Activated B cell treated with CpG ODN at 0.5 μM for 24 hours (primary cell): ENCODE measurements at regions of chr20 and their contacts with region 1.

Region 1: GRCh38 chr20:32031007-32031958 is 20.8 kb upstream of the HCK start:
- DNase-seq: peak; percentile 67
- ATAC-seq: peak; percentile 56
- H3K4me3 Mint-ChIP-seq: peak overlapping the region; percentile 71
- H3K27ac Mint-ChIP-seq: no peak overlapping the region
- H3K4me1 Mint-ChIP-seq: peaks cover 33% of the 10 kb centered on the region
- H3K27me3 Mint-ChIP-seq: peaks cover 3% of the 10 kb centered on the region
- CTCF ChIP-seq: peak; percentile 100

Region 2: GRCh38 chr20:31822421-31823330 is 208.6 kb before region 1 on chr20:
- CTCF ChIA-PET with region 1: interaction called, 18 read pairs
- POLR2A ChIA-PET with region 1: no interaction called
- intact Hi-C with region 1: loop called (anchors 1 kb)
- DNase-seq: peak; percentile 79
- ATAC-seq: peak; percentile 97
- H3K4me3 Mint-ChIP-seq: no peak overlapping the region
- H3K27ac Mint-ChIP-seq: no peak overlapping the region
- H3K4me1 Mint-ChIP-seq: peaks cover 4% of the 10 kb centered on the region
- H3K27me3 Mint-ChIP-seq: no peaks in the 10 kb centered on the region
- CTCF ChIP-seq: peak; percentile 92

Region 3: DNA sequence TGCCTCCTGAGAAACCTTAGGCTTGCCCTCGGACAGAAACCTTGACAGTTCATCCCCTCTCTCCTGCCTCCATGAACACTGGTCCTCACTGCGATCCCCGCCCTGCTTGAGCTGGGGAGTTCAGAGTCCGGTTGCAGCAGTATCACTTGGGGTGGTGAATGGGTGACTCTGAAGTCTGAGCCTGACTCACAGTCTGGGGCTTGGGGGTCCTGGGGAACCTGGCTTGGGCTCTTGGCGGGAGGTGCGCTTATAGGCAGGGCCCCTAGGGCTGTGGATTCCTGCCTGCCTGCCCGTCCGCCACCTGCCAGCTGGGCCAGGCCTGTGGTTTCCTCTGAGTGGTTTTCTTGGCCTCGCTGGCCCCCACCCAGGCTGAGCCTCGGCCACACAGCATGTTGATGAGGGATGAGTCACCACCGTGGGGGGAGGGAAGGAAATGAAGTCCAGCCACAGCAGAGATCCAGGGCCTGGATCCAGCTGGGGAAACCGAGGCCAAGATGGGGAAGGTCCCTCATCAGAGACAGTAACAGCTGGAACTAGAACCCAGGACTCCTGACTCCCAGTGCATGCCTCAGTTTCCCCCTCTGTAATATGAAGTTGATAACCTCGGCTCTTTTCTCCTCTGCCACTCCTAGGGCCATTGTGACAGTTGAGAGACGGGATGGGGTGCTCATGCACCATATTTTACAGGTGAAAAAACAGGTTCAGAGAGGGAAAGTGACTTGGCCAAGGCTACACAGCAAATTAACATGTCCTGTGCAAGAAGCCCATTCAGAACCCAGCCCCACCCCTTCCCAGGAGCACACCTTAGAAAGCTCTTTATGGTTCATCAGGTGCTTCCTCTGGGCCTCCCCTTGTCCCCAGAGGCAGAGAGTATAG is 195.1 kb before region 1 on chr20:
- CTCF ChIA-PET with region 1: no interaction called
- POLR2A ChIA-PET with region 1: no interaction called
- intact Hi-C with region 1: no loop called
- DNase-seq: peak; percentile 29
- ATAC-seq: peak; percentile 72
- H3K4me3 Mint-ChIP-seq: no peak overlapping the region
- H3K27ac Mint-ChIP-seq: no peak overlapping the region
- H3K4me1 Mint-ChIP-seq: peaks cover 9% of the 10 kb centered on the region
- H3K27me3 Mint-ChIP-seq: no peaks in the 10 kb centered on the region
- CTCF ChIP-seq: no peak

Region 4: GRCh38 chr20:31856516-31856915 is 174.8 kb before region 1 on chr20:
- CTCF ChIA-PET with region 1: interaction called, 47 read pairs
- POLR2A ChIA-PET with region 1: no interaction called
- intact Hi-C with region 1: loop called (anchors 1 kb)
- DNase-seq: no peak
- ATAC-seq: no peak
- H3K4me3 Mint-ChIP-seq: no peak overlapping the region
- H3K27ac Mint-ChIP-seq: no peak overlapping the region
- H3K4me1 Mint-ChIP-seq: peaks cover 13% of the 10 kb centered on the region
- H3K27me3 Mint-ChIP-seq: peaks cover 9% of the 10 kb centered on the region
- CTCF ChIP-seq: no peak

Region 5: GRCh38 chr20:31968291-31969126 is 62.8 kb before region 1 on chr20:
- CTCF ChIA-PET with region 1: interaction called, 3 read pairs
- POLR2A ChIA-PET with region 1: no interaction called
- intact Hi-C with region 1: loop called (anchors 5 kb)
- DNase-seq: peak; percentile 86
- ATAC-seq: peak; percentile 99
- H3K4me3 Mint-ChIP-seq: peak overlapping the region; percentile 85
- H3K27ac Mint-ChIP-seq: peak overlapping the region; percentile 12
- H3K4me1 Mint-ChIP-seq: peaks cover 14% of the 10 kb centered on the region
- H3K27me3 Mint-ChIP-seq: peaks cover 45% of the 10 kb centered on the region
- CTCF ChIP-seq: no peak

Region 6: DNA sequence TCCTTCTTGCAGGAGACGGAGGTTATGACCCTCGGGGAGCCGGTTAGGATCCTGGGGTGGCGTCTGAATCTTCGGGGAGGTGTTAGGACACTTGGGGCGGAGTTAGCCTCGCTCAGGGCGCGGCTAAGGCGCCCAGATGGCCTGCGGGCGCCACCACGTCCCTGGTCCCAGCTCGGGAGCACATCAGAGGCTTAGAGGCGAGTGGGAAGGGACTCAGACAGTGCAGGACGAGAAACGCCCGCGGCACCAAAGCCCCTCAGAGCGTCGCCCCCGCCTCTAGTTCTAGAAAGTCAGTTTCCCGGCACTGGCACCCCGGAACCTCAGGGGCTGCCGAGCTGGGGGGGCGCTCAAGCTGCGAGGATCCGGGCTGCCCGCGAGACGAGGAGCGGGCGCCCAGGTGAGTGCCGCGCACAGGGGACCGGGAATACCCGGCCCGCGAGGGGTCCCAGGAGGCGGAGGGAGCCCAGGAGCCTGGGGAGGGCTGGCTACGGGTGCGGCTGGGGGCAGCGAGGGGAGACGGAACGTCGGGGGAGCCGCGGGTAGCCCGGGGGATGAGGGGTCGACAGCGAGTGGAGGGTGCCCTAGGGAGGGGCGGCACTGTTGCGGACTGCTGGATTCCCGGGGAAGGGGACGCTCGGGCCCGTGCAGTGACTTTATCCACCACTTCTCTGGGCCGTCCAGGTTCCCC is 21.0 kb after region 1 on chr20 and contains the start of gene HCK:
- CTCF ChIA-PET with region 1: interaction called, 20 read pairs
- POLR2A ChIA-PET with region 1: interaction called, 453 read pairs
- intact Hi-C with region 1: no loop called
- DNase-seq: peak; percentile 46
- ATAC-seq: peak; percentile 54
- H3K4me3 Mint-ChIP-seq: peak within 1 kb of the TSS; percentile 93
- H3K27ac Mint-ChIP-seq: peak within 1 kb of the TSS; percentile 93
- H3K4me1 Mint-ChIP-seq: peaks cover 54% of the 10 kb centered on the region
- H3K27me3 Mint-ChIP-seq: no peaks in the 10 kb centered on the region
- CTCF ChIP-seq: no peak
- total RNA-seq, gene HCK: 183 TPM in 2 replicates

Region 7: DNA sequence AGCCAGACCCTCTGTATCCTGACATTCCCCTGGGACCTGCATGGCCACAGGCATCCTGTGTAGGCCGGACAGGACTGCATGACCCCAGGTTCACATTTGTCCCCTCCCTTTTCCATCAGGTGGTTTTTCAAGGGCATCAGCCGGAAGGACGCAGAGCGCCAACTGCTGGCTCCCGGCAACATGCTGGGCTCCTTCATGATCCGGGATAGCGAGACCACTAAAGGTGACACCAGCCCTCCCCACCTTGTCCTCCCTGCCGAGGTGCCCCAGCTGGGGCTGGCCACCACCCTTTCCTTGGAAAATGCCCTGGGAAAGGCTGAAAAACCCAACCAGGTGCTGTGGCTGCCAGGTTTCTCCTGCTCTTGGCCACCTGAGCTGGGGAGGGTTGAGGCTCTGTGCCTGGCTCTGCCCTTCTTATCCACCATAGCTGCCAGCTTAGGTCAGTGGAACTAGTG is 48.4 kb after region 1 on chr20:
- CTCF ChIA-PET with region 1: interaction called, 13 read pairs
- POLR2A ChIA-PET with region 1: interaction called, 5 read pairs
- intact Hi-C with region 1: no loop called
- DNase-seq: no peak
- ATAC-seq: no peak
- H3K4me3 Mint-ChIP-seq: no peak overlapping the region
- H3K27ac Mint-ChIP-seq: no peak overlapping the region
- H3K4me1 Mint-ChIP-seq: no peaks in the 10 kb centered on the region
- H3K27me3 Mint-ChIP-seq: no peaks in the 10 kb centered on the region
- CTCF ChIP-seq: no peak

Region 8: GRCh38 chr20:32207626-32208498 is 176.6 kb after region 1 on chr20 and contains the starts of genes PLAGL2 and POFUT1:
- CTCF ChIA-PET with region 1: interaction called, 3 read pairs
- POLR2A ChIA-PET with region 1: no interaction called
- intact Hi-C with region 1: loop called (anchors 5 kb)
- DNase-seq: peak; percentile 92
- ATAC-seq: peak; percentile 97
- H3K4me3 Mint-ChIP-seq: peak within 1 kb of the TSS; percentile 91
- H3K27ac Mint-ChIP-seq: peak within 1 kb of the TSS; percentile 85
- H3K4me1 Mint-ChIP-seq: peaks cover 62% of the 10 kb centered on the region
- H3K27me3 Mint-ChIP-seq: no peaks in the 10 kb centered on the region
- CTCF ChIP-seq: no peak
- total RNA-seq, gene PLAGL2: 17.3 and 17.9 TPM in 2 replicates
- total RNA-seq, gene POFUT1: 20.4 and 24.0 TPM in 2 replicates